ENCODE measurements at regions of chr10 and their contacts with region 1.

Region 1: DNA sequence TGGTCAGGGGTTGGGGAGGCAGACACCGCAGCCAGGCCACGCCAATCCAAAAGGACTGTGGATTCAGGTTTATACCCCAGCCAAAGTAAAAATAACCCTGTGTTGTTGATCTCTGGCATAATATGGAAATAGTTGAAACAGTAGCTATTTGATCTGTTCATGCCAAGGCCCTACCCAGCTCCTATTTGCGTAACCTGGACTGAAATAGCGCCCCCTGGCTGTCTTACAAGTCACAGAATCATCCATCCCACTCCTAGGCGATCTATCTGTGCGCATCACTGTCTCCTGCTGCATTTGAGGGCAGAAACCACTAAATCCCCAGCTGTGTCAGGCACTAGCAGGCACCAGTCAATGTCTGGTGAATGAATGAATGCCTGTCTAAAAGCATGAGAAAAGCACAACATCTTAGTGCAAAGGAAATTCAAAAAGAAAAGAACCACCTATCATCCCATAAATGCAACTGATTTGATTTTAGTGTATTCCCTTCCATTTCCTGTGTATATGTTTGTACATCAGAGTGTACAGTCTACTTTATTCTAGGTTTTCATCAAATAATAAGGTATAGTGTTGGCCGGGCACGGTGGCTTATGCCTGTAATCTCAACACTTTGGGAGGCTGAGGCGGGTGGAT is 160.0 kb downstream of the SLIT1 start:
- DNase-seq: peak; percentile 73
- H3K4me3 Mint-ChIP-seq: no peak overlapping the region
- H3K27ac Mint-ChIP-seq: no peak overlapping the region
- H3K4me1 Mint-ChIP-seq: no peaks in the 10 kb centered on the region
- H3K27me3 Mint-ChIP-seq: no peaks in the 10 kb centered on the region

Region 2: GRCh38 chr10:96740579-96741281 is 285.0 kb before region 1 on chr10:
- CTCF ChIA-PET with region 1: no interaction called
- POLR2A ChIA-PET with region 1: no interaction called
- intact Hi-C with region 1: no loop called
- DNase-seq: no peak
- H3K4me3 Mint-ChIP-seq: no peak overlapping the region
- H3K27ac Mint-ChIP-seq: no peak overlapping the region
- H3K4me1 Mint-ChIP-seq: no peaks in the 10 kb centered on the region
- H3K27me3 Mint-ChIP-seq: no peaks in the 10 kb centered on the region

Region 3: DNA sequence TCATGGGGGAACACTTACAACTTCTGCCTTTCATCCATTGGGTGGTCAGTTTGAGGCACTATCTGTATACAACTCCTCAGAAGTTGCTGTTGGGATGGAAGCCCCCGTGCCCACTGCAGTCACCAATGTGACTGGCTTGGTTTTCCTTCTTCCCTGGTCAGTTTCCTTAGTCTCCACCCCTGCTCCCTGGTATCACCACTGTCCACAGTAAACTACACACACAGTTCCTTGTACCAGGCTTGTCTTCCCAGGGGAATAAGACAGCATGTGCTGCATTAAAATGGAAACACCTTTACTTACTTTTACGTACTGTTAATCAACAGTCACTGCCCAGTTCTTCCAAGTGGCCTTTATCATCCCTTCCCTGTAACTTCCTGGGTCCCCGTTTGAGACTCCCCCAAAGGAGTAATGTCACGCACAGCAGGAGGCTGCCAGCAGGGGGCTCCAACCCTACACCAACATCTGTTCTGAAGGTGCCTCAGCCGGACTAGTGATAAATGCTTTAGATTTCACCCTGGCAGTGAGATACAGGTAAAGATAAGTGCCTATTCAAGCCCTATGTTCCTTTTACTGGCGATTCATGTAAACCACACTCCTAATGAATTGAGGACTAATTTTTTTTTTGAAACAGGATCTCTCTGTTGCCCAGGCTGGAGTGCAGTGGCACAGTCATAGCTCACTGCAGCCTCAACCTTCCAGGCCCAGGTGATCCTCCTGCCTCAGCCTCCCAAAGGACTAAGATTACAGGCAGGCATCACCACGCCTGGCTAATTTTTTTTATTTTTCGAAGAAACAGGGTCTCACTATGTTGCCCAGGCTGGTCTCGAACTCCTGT is 260.1 kb before region 1 on chr10:
- CTCF ChIA-PET with region 1: interaction called, 15 read pairs
- POLR2A ChIA-PET with region 1: no interaction called
- intact Hi-C with region 1: loop called (anchors 1 kb)
- DNase-seq: peak; percentile 83
- H3K4me3 Mint-ChIP-seq: peak overlapping the region; percentile 3
- H3K27ac Mint-ChIP-seq: no peak overlapping the region
- H3K4me1 Mint-ChIP-seq: no peaks in the 10 kb centered on the region
- H3K27me3 Mint-ChIP-seq: no peaks in the 10 kb centered on the region

Region 4: DNA sequence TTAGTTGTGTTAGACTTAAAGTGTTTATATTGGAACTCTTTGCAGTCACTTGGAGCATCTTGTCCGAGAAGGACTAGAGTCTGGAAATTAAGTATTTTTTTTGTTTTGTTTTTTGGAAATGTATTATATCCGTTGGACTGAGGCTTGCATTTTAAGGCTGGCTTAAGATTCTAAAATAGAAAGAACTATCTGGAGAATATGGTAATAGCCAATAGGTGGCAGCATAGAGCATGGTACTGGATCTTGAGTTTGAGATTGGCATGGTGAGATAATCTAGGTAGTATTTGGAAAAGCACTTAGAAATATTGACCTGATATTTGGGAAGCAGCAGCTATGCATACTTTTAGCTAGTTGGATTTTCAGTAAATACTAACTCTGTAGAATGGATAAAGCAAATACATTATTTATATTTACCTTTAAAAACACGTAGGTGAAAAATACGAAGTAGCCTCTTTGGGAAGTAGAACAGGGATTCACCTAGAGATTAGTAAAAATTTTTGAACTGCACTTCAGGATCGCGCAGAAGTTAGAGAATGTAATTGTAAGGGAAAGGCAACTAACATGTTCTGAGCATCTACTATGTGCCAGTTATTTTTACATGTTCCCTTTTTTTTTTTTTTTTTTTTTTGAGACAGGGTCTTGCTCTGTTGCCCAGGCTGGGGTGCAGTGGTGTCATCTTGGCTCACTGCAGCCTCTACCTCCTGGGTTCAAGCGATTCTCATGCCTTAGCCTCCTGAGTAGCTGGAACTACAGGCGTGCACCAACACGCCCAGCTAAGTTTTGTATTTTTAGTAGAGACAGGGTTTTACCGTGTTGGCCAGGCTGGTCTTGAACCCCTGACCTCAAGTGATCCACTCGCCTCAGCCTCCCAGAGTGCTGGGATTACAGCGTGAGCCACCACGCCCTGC is 115.0 kb before region 1 on chr10:
- CTCF ChIA-PET with region 1: interaction called, 51 read pairs
- POLR2A ChIA-PET with region 1: no interaction called
- intact Hi-C with region 1: loop called (anchors 1 kb)
- DNase-seq: no peak
- H3K4me3 Mint-ChIP-seq: no peak overlapping the region
- H3K27ac Mint-ChIP-seq: no peak overlapping the region
- H3K4me1 Mint-ChIP-seq: peaks cover 23% of the 10 kb centered on the region
- H3K27me3 Mint-ChIP-seq: no peaks in the 10 kb centered on the region

Region 5: GRCh38 chr10:96978621-96979154 is 47.0 kb before region 1 on chr10:
- CTCF ChIA-PET with region 1: interaction called, 9 read pairs
- POLR2A ChIA-PET with region 1: no interaction called
- intact Hi-C with region 1: loop called (anchors 5 kb)
- DNase-seq: no peak
- H3K4me3 Mint-ChIP-seq: peak overlapping the region; percentile 6
- H3K27ac Mint-ChIP-seq: peak overlapping the region; percentile 77
- H3K4me1 Mint-ChIP-seq: peaks cover 24% of the 10 kb centered on the region
- H3K27me3 Mint-ChIP-seq: no peaks in the 10 kb centered on the region

Region 6: DNA sequence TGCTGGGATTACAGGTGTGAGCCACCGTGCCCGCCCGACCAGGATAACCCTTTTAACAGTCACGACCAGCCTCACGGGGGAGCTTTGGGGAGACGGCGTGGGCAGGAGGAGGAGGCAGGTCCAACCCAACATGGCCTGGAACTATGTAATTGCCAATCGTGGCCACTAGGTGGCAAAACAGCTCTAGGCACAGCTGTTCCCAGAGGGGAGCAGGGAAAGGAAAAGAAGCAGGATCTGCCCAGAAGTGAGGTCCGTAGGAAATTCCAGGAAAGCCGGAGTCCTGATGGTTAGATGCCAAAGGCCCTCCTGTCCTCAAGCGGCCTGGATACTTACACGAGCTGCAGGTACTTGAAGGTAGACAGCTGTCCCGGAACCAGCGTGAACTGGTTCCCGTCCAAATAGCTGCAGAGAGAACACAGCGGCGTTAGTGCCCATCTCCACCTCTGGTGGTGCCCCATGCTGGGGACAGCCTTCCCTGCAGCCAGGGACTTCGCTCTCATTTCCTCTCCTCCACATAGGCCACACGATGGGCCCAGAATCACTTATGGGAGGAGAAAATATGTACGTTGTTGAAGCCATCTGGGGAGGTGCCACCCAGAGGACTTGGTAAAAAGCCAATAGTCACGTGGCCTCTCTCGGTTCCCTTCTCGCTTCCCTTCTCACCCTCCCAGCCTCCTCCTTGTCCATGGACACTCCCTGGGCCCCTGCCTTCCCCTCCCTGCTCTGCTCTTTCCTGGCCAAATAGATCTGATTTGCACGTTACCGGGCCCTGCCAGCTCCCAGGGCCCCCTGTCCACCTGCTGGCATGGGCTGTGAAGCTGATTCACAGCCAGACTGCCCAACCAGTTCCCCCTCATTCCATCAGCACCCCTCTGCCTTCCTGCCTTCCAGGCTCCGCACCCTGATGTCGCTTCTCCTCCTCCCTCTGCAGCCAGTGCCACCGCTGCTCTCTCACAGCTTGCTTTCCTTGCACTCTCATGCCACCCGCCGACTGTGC is 11.9 kb after region 1 on chr10:
- CTCF ChIA-PET with region 1: interaction called, 88 read pairs
- POLR2A ChIA-PET with region 1: no interaction called
- intact Hi-C with region 1: no loop called
- DNase-seq: peak; percentile 80
- H3K4me3 Mint-ChIP-seq: peak overlapping the region; percentile 49
- H3K27ac Mint-ChIP-seq: no peak overlapping the region
- H3K4me1 Mint-ChIP-seq: peaks cover 8% of the 10 kb centered on the region
- H3K27me3 Mint-ChIP-seq: peaks cover 8% of the 10 kb centered on the region